HEK293 (cell line): ENCODE measurements at regions of chrX and their contacts with region 1.

Region 1: GRCh38 chrX:23782863-23783568 is at the start of gene SAT1:
- H3K4me3 ChIP-seq: peak within 1 kb of the TSS; percentile 50
- H3K27ac ChIP-seq: peak within 1 kb of the TSS; percentile 87
- H3K4me1 ChIP-seq: no peaks in the 10 kb centered on the region
- CTCF ChIP-seq: peak; percentile 71; the same call in 1 of the 2 replicates

Region 2: DNA sequence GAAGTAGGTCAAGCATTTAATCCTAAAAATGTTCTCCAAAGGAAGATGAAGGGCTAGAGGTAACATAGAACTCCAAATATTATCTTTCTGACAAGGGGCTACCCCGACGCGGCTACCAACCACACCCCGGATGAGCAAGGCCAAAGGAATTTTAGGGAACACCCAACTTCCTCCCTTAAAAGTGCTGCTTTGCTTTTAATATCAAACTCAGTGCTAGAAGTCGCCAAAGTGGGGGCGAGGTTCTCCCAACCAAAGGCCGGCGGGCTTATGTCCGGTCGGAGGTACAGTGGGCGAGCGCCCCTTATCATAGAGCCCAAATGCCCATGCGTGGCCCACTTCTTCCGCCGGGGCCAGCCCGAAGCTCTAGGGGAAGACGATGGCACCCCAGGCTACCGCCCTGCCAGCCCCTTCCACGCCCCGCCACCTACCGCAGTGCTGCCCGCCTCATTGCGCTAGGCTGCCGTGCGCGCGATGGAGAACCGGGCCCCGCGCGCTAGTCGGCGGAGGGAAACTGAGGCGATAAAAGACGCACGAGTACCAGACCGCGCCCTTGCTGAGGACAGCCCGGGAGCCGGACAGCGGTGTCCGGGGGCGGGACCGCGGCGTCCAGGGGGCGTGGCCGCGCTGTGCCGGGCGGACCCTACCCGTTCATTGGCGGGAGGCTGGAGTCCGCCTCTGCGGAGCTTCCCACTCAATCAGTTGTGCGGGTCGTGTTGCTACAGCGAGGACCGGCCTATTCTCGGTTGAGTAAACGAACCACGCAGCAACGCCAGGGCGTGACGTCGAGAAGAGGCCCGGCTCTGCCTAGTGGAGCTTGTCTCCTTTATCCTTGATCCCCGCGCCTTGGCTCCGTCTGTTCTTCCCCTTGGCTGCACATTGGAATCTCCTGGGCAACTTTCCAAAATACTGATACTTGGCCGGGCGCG is 40.1 kb before region 1 on chrX and contains the start of gene ACOT9:
- CTCF ChIA-PET with region 1: interaction called, 5 read pairs
- POLR2A ChIA-PET with region 1: interaction called, 46 read pairs
- H3K4me3 ChIP-seq: peak within 1 kb of the TSS; percentile 80
- H3K27ac ChIP-seq: peak within 1 kb of the TSS; percentile 77
- H3K4me1 ChIP-seq: no peaks in the 10 kb centered on the region; the same call in 1 of the 2 replicates
- CTCF ChIP-seq: no peak

Region 3: GRCh38 chrX:23803931-23804381 is 20.9 kb after region 1 on chrX:
- CTCF ChIA-PET with region 1: interaction called, 4 read pairs
- POLR2A ChIA-PET with region 1: interaction called, 49 read pairs
- H3K4me3 ChIP-seq: no peak overlapping the region
- H3K27ac ChIP-seq: no peak overlapping the region
- H3K4me1 ChIP-seq: peaks cover 13% of the 10 kb centered on the region
- CTCF ChIP-seq: no peak

Region 4: DNA sequence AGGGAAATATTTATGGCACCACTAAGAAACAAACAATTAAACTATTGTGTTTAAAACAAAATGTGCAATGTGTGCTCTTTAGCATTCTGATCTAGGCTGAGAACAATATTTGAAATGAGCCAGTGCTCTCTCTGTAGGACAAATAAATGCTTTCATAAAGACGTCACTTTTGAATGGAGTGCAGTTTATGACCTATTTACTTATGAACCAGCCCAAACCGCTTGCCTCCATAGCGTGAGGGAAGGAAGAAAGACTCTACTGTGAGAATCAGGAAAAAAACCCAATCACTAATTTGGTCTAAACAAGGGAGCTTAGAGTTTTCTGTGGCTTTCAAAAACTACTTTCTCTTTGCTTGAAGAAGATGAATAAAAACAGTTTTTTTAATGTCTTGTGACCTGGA is 39.4 kb after region 1 on chrX:
- CTCF ChIA-PET with region 1: interaction called, 14 read pairs
- POLR2A ChIA-PET with region 1: interaction called, 44 read pairs
- H3K4me3 ChIP-seq: no peak overlapping the region
- H3K27ac ChIP-seq: peak overlapping the region; percentile 32
- H3K4me1 ChIP-seq: peaks cover 6% of the 10 kb centered on the region
- CTCF ChIP-seq: no peak

Region 5: GRCh38 chrX:23907498-23908218 is 124.6 kb after region 1 on chrX and contains the starts of genes APOO and CXorf58:
- CTCF ChIA-PET with region 1: interaction called, 65 read pairs
- POLR2A ChIA-PET with region 1: interaction called, 79 read pairs
- H3K4me3 ChIP-seq: peak within 1 kb of the TSS; percentile 58
- H3K27ac ChIP-seq: peak within 1 kb of the TSS; percentile 88
- H3K4me1 ChIP-seq: 0 out of 2 replicates have a peak, but pooled peaks cover 3% of the 10 kb centered on the region
- CTCF ChIP-seq: peak; percentile 89

Region 6: DNA sequence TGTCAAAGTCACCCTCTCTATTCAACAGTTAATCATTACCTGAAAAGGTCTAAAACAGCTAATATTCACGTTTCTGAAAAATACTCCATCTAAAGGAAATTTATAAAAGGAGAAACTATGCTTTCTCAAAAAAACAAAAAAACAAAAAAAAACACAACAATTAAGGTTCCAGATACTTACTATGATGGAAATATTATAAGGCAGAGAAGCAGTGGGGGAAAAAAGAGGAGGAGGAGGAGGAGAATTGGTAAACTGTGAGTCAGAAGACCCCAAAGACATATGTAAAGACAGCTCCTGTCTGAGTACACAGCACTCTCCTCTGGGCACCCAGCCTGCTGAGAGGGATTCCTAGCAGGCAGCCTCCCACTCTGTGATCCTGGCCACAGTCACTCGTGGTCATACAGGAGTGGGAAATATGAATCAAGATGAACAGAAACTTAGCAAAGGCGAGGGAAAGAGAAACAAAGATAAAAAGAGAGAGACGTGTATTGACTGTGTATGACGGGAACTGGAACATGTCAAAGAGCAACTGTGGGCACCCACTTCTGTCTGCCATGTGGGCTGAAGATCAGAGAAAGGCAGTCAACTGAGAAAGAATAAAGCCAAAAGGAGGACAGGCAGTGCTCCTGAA is 231.5 kb after region 1 on chrX:
- CTCF ChIA-PET with region 1: no interaction called
- POLR2A ChIA-PET with region 1: no interaction called
- H3K4me3 ChIP-seq: no peak overlapping the region
- H3K27ac ChIP-seq: no peak overlapping the region
- H3K4me1 ChIP-seq: peaks cover 1% of the 10 kb centered on the region; the same call in 1 of the 2 replicates
- CTCF ChIP-seq: no peak

Region 7: DNA sequence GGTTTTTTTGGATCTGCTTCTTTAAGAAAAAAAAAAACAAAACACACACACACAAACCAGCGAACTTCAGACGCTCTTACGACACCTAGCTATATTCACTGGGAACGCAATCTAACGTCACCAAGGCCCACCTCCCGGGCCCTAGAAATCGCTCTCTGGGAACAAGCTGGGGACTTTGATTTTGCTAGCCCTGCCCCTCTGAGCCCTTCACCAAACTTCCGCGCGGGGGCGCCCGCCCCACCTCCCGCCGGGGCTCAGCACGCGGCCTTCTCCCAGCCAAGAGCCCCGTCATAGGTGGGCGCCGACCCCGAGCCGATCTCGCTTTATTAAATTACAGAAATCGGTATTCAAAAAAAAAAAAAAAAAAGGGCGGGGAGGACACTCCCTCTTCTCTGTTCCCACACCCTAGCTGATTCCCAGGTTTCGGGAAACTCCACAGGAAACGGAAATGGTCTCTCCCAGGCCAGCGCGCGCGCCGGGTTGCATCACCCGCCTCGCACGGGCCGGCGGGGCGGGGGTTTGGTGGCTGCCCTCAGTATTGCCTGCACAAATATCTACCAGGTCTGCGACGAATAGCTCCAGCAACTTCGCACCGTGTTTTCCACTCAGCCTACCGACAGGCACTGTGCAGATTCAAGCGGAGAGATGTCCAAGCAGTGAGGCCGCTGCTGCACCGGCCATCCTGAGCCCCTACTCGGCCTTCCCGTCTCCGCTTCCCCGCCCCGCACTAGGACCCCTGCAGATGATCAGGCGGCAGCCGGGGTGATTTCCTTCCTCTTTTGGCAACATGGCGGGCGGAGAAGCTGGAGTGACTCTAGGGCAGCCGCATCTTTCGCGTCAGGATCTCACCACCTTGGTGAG is 271.4 kb after region 1 on chrX and contains the start of gene EIF2S3:
- CTCF ChIA-PET with region 1: interaction called, 3 read pairs
- POLR2A ChIA-PET with region 1: interaction called, 19 read pairs
- H3K4me3 ChIP-seq: peak within 1 kb of the TSS; percentile 39
- H3K27ac ChIP-seq: peak within 1 kb of the TSS; percentile 98
- H3K4me1 ChIP-seq: no peaks in the 10 kb centered on the region
- CTCF ChIP-seq: peak; percentile 88